Activated naive CD4-positive, alpha-beta T cell treated with anti-CD3 and anti-CD28 coated beads for 36 hours (primary cell): ENCODE measurements at regions of chr15 and their contacts with region 1.

Region 1: GRCh38 chr15:68053701-68054627 is at the start of gene PIAS1:
- DNase-seq: peak; percentile 95
- H3K4me3 Mint-ChIP-seq: peak within 1 kb of the TSS; percentile 86
- H3K27ac Mint-ChIP-seq: peak within 1 kb of the TSS; percentile 89
- H3K4me1 Mint-ChIP-seq: peaks cover 36% of the 10 kb centered on the region
- H3K27me3 Mint-ChIP-seq: peaks cover 11% of the 10 kb centered on the region
- total RNA-seq, gene PIAS1: 29.8 to 33.4 TPM

Region 2: DNA sequence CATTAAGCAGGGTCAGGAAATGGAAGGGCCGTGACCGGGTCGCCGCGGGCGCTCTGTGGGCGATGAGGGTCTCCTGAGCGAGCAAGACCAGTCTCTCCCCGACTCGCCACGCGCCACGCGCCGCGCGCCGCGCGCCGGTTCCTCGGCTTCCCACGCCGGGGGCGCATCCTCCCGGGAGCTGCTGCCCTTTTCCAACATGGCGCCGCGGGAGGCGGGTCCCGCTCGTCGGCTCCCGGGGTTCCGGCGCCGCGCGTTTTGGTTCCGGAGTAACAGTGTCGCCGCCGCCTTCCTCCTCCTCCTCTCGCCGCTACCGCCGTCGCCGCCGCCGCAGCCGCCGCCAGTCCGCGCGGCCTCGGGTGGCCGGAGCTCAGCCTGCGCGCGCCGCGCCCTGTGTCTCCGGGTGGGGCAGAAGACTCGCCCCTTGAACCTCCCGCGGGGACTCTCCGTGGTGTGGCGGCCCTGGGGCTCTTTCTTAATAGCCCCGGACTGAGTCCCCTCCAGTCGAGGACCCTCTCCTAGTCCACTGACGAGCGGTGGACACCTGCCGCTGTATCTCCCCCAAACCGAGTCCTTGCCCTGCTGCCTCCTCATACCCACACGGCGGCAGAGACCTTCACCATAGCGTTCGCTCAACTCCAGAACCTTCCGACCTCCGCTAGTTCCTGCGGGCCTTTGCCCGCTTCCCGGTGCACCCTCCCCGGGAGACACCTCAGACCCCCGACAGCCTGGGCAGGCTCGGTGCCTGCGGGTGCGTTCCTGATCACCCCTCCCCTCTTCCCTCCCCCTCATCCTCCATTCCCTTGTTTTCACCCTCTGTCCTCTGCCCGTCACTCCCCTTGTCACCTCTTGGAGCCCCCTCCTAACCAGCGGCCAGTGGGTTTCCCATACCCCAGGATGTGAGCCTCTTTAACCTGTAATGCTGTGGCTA is 511.3 kb before region 1 on chr15 and contains the start of gene MAP2K5:
- CTCF ChIA-PET with region 1: no interaction called
- intact Hi-C with region 1: loop called (anchors 10 kb)
- DNase-seq: peak; percentile 84
- H3K4me3 Mint-ChIP-seq: peak within 1 kb of the TSS; percentile 91
- H3K27ac Mint-ChIP-seq: peak within 1 kb of the TSS; percentile 95
- H3K4me1 Mint-ChIP-seq: peaks cover 47% of the 10 kb centered on the region
- H3K27me3 Mint-ChIP-seq: no peaks in the 10 kb centered on the region
- total RNA-seq, gene MAP2K5: 15.4 to 20.6 TPM

Region 3: GRCh38 chr15:67884514-67885487 is 169.2 kb before region 1 on chr15:
- CTCF ChIA-PET with region 1: no interaction called
- intact Hi-C with region 1: loop called (anchors 10 kb)
- DNase-seq: peak; percentile 60
- H3K4me3 Mint-ChIP-seq: peak overlapping the region; percentile 67
- H3K27ac Mint-ChIP-seq: no peak overlapping the region
- H3K4me1 Mint-ChIP-seq: peaks cover 17% of the 10 kb centered on the region
- H3K27me3 Mint-ChIP-seq: peaks cover 5% of the 10 kb centered on the region

Region 4: GRCh38 chr15:68229386-68230156 is 175.6 kb after region 1 on chr15 and contains the start of gene CLN6:
- CTCF ChIA-PET with region 1: no interaction called
- intact Hi-C with region 1: loop called (anchors 1 kb)
- DNase-seq: peak; percentile 75
- H3K4me3 Mint-ChIP-seq: peak within 1 kb of the TSS; percentile 85
- H3K27ac Mint-ChIP-seq: peak within 1 kb of the TSS; percentile 80
- H3K4me1 Mint-ChIP-seq: peaks cover 43% of the 10 kb centered on the region
- H3K27me3 Mint-ChIP-seq: no peaks in the 10 kb centered on the region
- total RNA-seq, gene CLN6: 30.5 to 34.2 TPM

Region 5: GRCh38 chr15:68795298-68795848 is 741.4 kb after region 1 on chr15:
- CTCF ChIA-PET with region 1: no interaction called
- intact Hi-C with region 1: loop called (anchors 10 kb)
- DNase-seq: peak; percentile 91
- H3K4me3 Mint-ChIP-seq: peak overlapping the region; percentile 32
- H3K27ac Mint-ChIP-seq: peak overlapping the region; percentile 65
- H3K4me1 Mint-ChIP-seq: peaks cover 98% of the 10 kb centered on the region
- H3K27me3 Mint-ChIP-seq: no peaks in the 10 kb centered on the region